Right lobe of liver (tissue), 6 donors: ENCODE measurements at regions of chr7 and their contacts with region 1.

Region 1: DNA sequence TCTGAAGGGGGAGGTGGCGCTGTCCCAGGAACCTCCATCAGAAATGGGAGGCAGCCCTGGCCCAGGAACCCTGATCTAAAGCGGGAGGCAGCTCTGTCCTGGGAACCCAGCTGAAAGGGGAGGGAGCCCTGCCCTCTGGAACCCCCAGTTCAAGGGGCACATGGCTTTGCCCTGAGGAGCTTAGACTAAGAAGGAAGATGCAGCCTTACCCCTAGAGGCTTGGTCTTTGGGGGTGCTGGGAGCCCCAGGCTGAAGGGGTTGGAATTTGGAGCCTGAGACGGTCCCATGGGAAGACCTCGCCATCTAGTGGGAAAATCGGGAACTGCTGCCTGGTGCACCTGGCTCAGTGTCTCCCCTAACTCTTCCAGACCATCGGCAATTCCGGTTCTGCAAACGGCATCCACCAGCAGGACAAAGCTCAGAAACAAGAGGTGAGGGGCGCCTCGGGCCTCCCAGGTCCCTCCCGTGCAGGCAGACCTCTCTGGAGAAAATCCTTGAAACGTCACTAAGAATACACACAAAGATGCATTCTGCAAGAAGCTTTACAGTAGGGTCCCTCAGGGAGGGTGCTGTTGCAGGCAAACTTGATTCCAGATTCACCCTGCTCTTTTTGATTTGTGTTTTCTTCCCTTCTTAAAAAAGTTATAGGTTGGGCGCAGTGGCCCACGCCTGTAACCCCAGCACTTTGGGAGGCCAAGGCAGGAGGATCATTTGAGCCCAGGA is 52.4 kb upstream of the GTF2IRD1 start:
- DNase-seq: peak; percentile 63 to 72 (median 71)
- ATAC-seq: peak; percentile 77 to 92 (median 86)
- H3K4me3 ChIP-seq: no peak overlapping the region
- H3K27ac ChIP-seq: no peak overlapping the region
- H3K4me1 ChIP-seq: no peaks in the 10 kb centered on the region
- H3K27me3 ChIP-seq: no peaks in the 10 kb centered on the region
- CTCF ChIP-seq: peak; percentile 89 to 99 (median 96)
- POLR2A ChIP-seq: no peak

Region 2: GRCh38 chr7:74061840-74062539 is 339.3 kb before region 1 on chr7:
- intact Hi-C with region 1: loop called (anchors 5 to 10 kb)
- DNase-seq: peak; percentile 81 to 91 (median 88)
- ATAC-seq: peak; percentile 78 to 85 (median 82)
- H3K4me3 ChIP-seq: peak overlapping the region; percentile 9 to 41 (median 14)
- H3K27ac ChIP-seq: peak overlapping the region; percentile 79 to 82 (median 81)
- H3K4me1 ChIP-seq: peaks cover 0 to 16% (median 5%) of the 10 kb centered on the region in 4 donors
- H3K27me3 ChIP-seq: no peaks in the 10 kb centered on the region
- CTCF ChIP-seq: no peak
- POLR2A ChIP-seq: peak; percentile 48

Region 3: DNA sequence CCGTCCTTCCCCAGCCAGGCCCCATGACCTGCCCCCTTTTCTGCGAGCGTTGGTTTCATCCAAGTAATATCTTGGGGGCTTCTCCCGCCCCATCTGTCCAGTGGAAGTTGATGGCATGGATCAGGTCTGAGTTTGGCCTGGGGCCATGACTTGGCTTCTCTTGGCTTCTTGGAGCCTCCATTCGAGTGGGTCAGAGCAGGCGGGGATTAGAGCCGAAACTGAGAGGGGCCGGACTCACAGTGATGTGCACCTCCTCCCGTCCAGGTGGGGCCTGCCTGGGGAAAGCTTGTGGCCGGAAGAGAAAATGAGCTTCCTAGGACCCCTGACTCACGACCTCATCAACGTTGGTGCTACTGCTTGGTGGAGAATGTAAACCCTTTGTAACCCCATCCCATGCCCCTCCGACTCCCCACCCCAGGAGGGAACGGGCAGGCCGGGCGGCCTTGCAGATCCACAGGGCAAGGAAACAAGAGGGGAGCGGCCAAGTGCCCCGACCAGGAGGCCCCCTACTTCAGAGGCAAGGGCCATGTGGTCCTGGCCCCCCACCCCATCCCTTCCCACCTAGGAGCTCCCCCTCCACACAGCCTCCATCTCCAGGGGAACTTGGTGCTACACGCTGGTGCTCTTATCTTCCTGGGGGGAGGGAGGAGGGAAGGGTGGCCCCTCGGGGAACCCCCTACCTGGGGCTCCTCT is 332.8 kb before region 1 on chr7:
- intact Hi-C with region 1: loop called (anchors 5 to 10 kb)
- DNase-seq: peak in 1 of 3 donors; percentile 52
- ATAC-seq: no peak
- H3K4me3 ChIP-seq: no peak overlapping the region
- H3K27ac ChIP-seq: no peak overlapping the region
- H3K4me1 ChIP-seq: no peaks in the 10 kb centered on the region
- H3K27me3 ChIP-seq: no peaks in the 10 kb centered on the region
- CTCF ChIP-seq: no peak
- POLR2A ChIP-seq: no peak